Posterior vena cava (tissue), 2 donors: ENCODE measurements at regions of chr9 and their contacts with region 1.

Region 1: DNA sequence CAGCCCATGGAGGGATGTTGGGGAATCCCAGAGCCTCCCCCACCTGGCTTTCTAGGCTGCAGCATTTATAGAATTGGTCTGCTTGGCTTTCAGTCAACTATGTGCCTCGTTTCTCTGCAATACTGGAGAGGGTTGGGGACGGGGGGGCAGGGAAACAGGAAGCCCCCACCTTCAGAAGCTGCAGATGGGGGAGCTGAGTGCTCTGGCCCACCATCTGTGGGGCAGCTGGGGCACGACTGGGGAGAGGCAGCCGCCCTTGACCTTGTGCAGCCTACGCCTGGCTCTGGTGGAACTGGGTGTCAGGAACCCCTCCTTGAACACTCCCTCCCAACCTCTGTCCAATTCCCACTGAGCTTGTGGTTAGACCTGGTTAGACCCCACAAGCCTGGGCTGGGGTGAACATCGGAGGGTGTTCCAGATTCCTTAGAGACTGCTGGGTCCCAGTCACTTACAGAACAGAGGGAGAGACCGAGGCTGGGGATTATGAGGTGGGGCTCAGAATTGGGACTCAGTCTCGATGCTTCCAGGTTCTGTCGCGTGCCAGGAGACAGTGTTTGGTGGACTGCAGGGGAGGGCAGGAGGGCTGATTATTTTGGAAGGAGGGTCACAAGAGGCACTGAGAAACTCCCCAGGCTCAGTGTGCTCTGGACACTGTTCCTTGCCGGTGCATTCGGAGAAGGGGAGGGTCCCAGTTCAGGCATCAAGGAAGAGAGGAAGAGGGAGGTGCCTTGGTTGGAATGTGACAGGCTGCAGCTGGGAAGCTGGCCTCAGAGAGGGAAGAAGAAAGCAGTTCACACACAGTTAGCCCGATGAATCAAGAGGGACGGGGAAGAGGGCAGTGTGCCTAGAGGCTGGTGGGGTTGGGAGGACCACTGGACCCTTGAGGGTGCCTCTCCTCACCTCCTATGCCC is 25.6 kb downstream of the COL27A1 start:
- DNase-seq: peak; percentile 56

Region 2: GRCh38 chr9:113463418-113464285 is 717.3 kb before region 1 on chr9 and contains the start of gene RGS3:
- intact Hi-C with region 1: no loop called
- DNase-seq: peak; percentile 77
- total RNA-seq, gene RGS3: 66.2 to 71.4 TPM

Region 3: DNA sequence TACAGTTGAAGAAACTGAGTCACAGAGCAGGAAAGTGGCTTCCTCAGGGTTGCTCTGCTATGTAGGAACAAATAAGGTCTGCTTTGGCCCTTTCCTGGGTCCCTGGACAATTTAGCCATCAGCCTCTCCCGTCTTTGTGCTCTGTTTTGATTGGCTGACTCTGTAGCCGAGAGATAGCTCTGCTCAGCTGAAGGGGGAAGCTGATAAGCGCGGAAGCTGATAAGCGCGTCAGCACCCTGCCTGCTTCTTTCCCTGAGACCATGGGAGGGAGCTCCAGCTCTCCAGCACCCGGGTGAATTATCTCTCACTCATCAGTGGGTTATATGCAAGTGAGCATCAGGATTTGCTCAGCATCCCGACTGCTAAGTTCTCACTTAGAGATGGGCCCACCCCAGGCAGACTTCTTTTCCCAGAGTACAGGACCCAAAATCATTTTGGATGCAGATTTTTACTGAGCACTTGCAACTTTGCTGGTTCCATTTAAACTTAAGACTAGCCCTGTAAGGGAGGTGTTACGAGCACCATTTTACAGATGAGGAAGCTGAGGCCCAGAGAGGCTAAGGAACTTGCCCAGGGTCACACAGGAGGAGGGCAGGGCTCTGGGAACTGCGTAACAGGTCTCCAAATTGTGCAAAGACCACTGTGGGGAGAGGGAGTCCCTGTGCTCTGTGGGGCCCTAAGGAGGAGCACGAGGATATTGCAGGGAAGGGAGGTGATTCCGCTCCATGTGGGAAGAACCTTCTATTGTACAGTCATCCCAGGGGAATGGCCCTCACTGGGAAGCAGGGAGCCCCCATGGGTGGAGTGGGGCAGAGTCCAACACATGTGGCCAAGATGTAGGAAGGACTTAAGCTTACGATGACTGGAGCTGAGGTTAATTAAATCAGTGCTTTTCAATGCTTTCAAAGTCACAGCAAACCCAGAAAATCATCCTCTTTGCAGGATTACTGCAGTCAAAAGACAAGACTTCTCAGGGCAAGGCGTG is 58.2 kb after region 1 on chr9:
- intact Hi-C with region 1: loop called in 1 of 2 experiments (anchors 5 kb)
- DNase-seq: no peak

Region 4: DNA sequence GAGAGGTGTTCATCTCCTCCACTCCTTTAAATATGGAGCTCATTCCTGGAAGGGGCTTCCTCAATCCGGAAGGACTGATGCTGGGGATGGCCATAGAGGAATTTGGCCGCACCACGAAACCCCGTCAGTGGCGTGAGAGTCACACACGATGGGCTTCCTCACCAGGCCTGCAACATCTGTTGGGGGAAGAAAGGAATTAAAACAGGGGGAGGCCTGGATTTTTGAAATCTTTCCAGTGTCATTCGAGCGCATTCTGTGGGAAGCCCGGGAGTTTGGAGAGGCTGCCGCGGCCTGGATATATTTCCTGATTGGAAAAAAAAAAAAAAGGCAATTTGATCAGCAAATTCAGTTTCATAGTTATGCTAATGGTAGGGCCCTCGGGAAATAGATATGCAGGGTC is 65.6 kb after region 1 on chr9:
- intact Hi-C with region 1: loop called (anchors 2 to 5 kb)
- DNase-seq: no peak

Region 5: DNA sequence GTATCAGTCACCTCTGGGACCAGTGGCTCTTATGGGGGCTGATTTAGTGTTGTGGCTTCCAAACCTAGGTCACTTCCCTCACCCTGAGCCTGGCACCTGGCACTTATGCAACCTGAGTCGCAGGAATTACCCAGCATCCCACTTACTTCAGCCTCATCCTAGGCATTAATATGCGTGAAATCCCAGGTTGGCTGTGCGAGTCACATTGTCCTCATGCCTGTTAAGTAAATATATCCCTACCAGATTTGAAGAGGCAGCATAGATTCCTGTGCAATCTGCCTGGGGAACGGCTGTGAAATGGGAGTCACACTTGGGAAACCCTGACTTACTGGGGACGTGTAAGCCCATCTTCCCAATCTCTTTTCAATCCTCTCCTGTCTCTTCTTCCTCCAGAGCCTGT is 249.5 kb after region 1 on chr9:
- intact Hi-C with region 1: no loop called
- DNase-seq: no peak